PC-3 (cell line): ENCODE measurements at regions of chr2 and their contacts with region 1.

Region 1: DNA sequence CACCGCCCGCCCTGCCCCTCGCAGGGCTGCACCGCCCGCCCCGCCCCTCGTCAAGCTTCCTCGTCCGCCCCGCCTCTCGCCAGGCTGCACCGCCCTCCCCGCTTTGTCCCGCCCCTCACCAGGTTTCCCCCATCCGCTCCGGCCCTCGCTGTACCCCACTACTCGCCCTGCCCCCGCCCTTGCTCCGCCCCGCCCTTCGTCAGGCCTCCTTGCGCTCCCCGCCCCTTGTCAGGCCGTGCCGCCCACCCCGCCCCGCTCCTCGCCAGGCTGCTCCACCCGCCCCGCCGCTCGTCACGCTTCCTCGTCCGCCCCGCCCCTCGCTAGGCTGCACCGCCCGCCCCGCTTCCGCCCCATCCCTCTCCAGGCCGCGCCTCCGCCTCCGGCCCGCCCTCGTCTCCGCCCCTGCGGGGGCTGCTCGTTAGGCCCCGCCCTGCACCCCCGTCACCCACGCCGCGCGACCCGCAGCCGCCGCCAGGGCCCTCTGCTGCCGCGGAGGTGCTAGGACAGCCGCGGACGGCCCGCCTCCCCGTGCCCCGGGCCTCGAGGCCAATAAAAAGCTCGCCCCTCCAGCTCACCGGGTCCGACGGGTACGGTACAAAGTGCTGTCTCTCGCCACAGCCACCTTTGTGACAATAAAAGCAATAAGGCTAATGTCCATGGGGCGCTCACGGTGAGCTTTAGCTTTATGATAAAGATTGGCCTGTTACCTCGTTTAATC is 574 bp upstream of the DNPEP start:
- DNase-seq: peak; percentile 95
- ATAC-seq: peak; percentile 67
- H3K4me3 ChIP-seq: peak overlapping the region; percentile 66
- H3K27ac ChIP-seq: peak overlapping the region; percentile 5; the same call in 1 of the 2 replicates
- H3K4me1 ChIP-seq: peaks cover 15% of the 10 kb centered on the region
- H3K27me3 ChIP-seq: no peaks in the 10 kb centered on the region
- CTCF ChIP-seq: peak; percentile 64

Region 2: GRCh38 chr2:218806346-218806978 is 581.8 kb before region 1 on chr2:
- CTCF ChIA-PET with region 1: no interaction called
- POLR2A ChIA-PET with region 1: no interaction called
- intact Hi-C with region 1: no loop called
- DNase-seq: peak; percentile 79
- ATAC-seq: peak; percentile 51
- H3K4me3 ChIP-seq: no peak overlapping the region
- H3K27ac ChIP-seq: no peak overlapping the region
- H3K4me1 ChIP-seq: peaks cover 12% of the 10 kb centered on the region
- H3K27me3 ChIP-seq: no peaks in the 10 kb centered on the region
- CTCF ChIP-seq: no peak

Region 3: DNA sequence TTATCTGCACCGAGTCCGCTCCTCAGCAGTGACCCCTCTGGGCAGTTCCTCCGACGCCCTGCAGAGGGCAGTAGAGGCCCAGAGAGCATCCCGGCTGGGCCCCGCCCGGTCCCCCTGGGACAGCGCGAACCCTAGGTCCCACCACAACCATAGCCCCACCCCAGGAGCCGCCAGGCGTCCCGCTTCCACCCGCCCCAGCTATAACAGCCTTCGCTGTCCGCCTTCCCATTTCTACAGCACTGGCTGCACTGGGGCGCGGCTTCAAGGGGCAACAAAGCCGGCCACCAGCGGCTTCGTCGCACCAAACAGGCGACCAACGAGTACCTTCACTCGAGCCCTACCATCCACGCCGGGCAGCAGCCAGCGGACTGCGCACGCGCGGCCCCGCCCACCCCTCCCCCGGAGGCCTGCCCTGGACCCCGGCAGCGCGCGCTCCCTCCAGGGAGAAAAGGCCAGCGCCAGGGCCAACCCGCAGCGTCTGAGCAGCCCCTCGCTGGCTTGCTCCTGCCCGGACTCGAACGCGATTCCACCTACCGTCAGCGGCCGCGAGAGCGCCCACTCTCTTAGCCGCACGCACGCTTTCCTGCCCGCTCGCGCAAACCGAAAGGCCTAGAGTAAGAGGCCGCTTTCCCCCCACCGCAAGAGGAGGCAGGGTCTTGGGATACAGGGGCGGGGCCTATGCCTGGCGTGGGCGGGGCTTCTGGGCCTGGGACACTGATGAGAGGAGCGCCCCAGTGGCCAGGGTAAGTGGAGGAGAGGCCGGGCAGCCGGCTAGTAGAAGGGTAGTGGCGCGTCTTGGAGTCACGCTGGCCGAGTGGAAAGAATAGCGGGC is 227.9 kb before region 1 on chr2 and contains the start of gene NHEJ1:
- CTCF ChIA-PET with region 1: no interaction called
- POLR2A ChIA-PET with region 1: no interaction called
- intact Hi-C with region 1: loop called (anchors 10 kb)
- DNase-seq: peak; percentile 92
- ATAC-seq: peak; percentile 91
- H3K4me3 ChIP-seq: peak within 1 kb of the TSS; percentile 79
- H3K27ac ChIP-seq: peak within 1 kb of the TSS; percentile 62
- H3K4me1 ChIP-seq: peaks cover 26% of the 10 kb centered on the region
- H3K27me3 ChIP-seq: no peaks in the 10 kb centered on the region
- CTCF ChIP-seq: peak; percentile 90
- total RNA-seq, gene NHEJ1: 16.7 and 18.5 TPM in 2 replicates

Region 4: GRCh38 chr2:219278655-219279516 is 109.4 kb before region 1 on chr2 and contains the start of gene DNAJB2:
- CTCF ChIA-PET with region 1: interaction called, 5 read pairs
- POLR2A ChIA-PET with region 1: interaction called, 14 read pairs
- intact Hi-C with region 1: no loop called
- DNase-seq: peak; percentile 99
- ATAC-seq: peak; percentile 86
- H3K4me3 ChIP-seq: peak within 1 kb of the TSS; percentile 86
- H3K27ac ChIP-seq: peak within 1 kb of the TSS; percentile 85
- H3K4me1 ChIP-seq: peaks cover 38% of the 10 kb centered on the region
- H3K27me3 ChIP-seq: no peaks in the 10 kb centered on the region
- CTCF ChIP-seq: no peak
- total RNA-seq, gene DNAJB2: 62.3 and 98.4 TPM in 2 replicates

Region 5: GRCh38 chr2:219362524-219363164 is 25.6 kb before region 1 on chr2:
- CTCF ChIA-PET with region 1: no interaction called
- POLR2A ChIA-PET with region 1: interaction called, 3 read pairs
- intact Hi-C with region 1: loop called (anchors 1 kb)
- DNase-seq: peak; percentile 92
- ATAC-seq: peak; percentile 100
- H3K4me3 ChIP-seq: no peak overlapping the region
- H3K27ac ChIP-seq: peak overlapping the region; percentile 32
- H3K4me1 ChIP-seq: peaks cover 15% of the 10 kb centered on the region
- H3K27me3 ChIP-seq: no peaks in the 10 kb centered on the region
- CTCF ChIP-seq: no peak

Region 6: GRCh38 chr2:219521066-219521880 is 133.0 kb after region 1 on chr2:
- CTCF ChIA-PET with region 1: interaction called, 15 read pairs
- POLR2A ChIA-PET with region 1: no interaction called
- intact Hi-C with region 1: no loop called
- DNase-seq: peak; percentile 61
- ATAC-seq: peak; percentile 79
- H3K4me3 ChIP-seq: peak overlapping the region; percentile 44; the same call in 1 of the 2 replicates
- H3K27ac ChIP-seq: no peak overlapping the region
- H3K4me1 ChIP-seq: peaks cover 14% of the 10 kb centered on the region
- H3K27me3 ChIP-seq: no peaks in the 10 kb centered on the region
- CTCF ChIP-seq: peak; percentile 91

Region 7: DNA sequence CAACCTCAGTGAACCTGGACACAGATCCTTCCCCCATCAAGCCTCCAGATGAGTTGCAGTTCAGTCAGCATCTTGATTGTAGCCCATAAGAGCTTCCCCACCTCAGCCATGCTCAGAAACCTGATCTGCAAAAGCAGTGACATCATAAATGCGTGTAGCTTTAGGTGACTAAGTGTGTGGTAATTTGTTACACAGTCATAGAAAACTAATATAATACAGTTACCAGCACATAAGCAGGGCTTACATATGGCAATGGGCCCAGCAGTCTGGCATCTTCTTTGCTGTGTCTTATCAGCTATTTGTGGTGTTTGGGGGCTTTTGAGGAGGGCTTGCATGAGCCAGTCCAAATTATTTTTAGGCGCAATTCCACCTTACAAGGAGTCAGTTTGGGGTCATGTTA is 1046.1 kb after region 1 on chr2:
- CTCF ChIA-PET with region 1: no interaction called
- POLR2A ChIA-PET with region 1: interaction called, 10 read pairs
- intact Hi-C with region 1: no loop called
- DNase-seq: peak; percentile 65
- ATAC-seq: peak; percentile 77
- H3K4me3 ChIP-seq: no peak overlapping the region
- H3K27ac ChIP-seq: peak overlapping the region; percentile 61
- H3K4me1 ChIP-seq: peaks cover 25% of the 10 kb centered on the region
- H3K27me3 ChIP-seq: no peaks in the 10 kb centered on the region
- CTCF ChIP-seq: no peak